ENCODE measurements at regions of chr22 and their contacts with region 1.

Region 1: DNA sequence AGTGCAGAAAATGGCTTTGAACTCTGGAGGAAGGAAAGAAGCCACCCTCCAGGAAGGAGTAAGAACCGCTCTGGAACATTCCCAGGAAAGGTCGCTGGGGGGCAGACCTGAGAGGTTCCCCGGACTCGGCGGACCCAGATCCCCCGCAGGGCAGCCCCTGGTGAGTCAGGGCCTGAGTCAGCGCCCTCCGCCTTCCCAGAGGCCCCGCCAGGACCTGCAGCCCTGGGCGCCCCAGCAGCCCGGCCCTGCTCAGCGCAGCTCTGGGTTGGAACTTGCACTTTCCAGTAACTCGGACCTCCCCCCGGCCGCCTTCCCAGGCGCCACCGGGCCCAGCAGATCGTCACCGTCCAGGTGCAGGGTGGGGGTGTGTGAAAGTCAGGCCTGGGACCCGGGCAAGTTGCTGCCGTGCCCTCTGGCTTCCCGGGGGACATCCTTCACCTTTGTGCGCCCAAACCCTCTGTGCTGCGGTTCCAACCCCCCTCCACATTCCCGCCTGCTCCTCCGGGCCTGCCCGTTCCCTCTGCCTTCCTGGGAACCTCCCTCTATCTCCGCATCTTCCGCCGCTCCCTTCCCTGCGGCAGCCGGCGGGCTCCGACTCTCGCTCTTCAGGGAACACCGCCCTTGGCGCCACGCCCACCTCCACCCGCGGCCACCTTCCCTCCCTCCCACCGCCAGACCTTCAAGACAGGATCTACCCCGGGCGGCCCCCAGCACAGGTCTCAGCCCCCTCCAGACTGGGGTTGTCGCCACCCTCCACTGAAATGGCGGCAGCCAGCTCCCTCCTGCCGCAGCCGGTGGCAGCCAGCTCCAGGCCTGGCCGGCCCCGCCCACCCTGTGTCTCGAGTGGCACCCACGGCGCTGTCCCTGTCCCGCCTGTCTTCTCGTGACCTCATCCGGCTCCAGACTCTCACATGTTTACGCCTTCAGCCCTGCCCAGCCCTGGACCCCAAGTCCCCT is 36.8 kb upstream of the WNT7B start:
- DNase-seq: peak; percentile 94
- H3K4me3 ChIP-seq: peak overlapping the region; percentile 58
- H3K27ac ChIP-seq: peak overlapping the region; percentile 82
- H3K4me1 ChIP-seq: peaks cover 18% of the 10 kb centered on the region
- H3K27me3 ChIP-seq: no peaks in the 10 kb centered on the region
- CTCF ChIP-seq: peak; percentile 77

Region 2: GRCh38 chr22:46079861-46080821 is 66.4 kb after region 1 on chr22:
- CTCF ChIA-PET with region 1: no interaction called
- POLR2A ChIA-PET with region 1: no interaction called
- intact Hi-C with region 1: loop called (anchors 5 kb)
- DNase-seq: peak; percentile 94
- H3K4me3 ChIP-seq: peak overlapping the region; percentile 85
- H3K27ac ChIP-seq: peak overlapping the region; percentile 97
- H3K4me1 ChIP-seq: peaks cover 75% of the 10 kb centered on the region
- H3K27me3 ChIP-seq: no peaks in the 10 kb centered on the region
- CTCF ChIP-seq: 0 out of 2 replicates have a peak, but pooled peaks have one; percentile 15

Region 3: GRCh38 chr22:46094676-46095075 is 80.9 kb after region 1 on chr22:
- CTCF ChIA-PET with region 1: no interaction called
- POLR2A ChIA-PET with region 1: interaction called, 12 read pairs
- intact Hi-C with region 1: no loop called
- DNase-seq: no peak
- H3K4me3 ChIP-seq: no peak overlapping the region
- H3K27ac ChIP-seq: peak overlapping the region; percentile 38
- H3K4me1 ChIP-seq: peaks cover 8% of the 10 kb centered on the region
- H3K27me3 ChIP-seq: no peaks in the 10 kb centered on the region
- CTCF ChIP-seq: no peak

Region 4: DNA sequence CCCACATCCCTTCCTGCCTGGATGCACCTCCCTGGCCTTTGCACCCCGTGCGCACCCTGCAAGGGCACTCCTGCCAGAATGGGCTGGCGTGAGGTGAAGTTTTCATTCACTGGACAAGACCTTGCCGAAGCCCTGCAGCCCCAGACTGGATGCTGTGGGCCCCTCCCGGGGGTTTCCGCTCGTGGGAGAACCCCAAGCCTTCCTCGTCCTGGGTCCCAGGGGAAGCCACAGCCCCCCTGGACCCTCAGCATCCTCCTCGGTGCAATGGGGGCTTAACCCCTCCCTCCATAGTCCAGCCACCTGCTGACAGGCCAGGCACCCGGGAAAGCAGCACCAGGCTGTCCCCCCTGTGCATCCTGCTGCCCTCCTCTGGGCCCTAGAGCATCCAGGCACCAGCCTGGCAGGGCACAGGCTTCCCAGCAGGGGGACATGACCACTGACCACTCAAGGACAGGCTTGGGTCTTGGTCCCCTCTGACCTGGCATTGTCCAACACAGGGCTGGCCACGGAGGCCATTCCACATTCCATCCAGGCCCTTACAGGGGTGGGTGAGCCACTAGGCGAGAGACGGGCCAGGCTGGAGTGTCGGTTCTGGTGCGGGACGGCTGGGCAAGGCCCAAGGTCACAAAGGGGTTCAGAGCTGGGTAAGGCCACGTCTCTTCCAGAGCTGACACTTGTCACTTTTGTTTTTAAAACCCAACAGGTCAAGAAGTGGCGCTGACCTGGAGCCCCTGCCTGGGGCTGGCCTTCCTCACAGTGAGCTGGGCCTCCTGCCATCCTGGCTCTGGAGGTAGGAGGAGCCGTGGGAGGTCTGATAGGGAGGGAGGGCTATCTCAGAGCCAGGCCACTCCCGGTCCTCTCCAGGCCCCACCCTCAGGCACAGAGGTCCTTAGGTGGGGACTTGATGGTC is 95.1 kb after region 1 on chr22:
- CTCF ChIA-PET with region 1: no interaction called
- POLR2A ChIA-PET with region 1: no interaction called
- intact Hi-C with region 1: no loop called
- DNase-seq: peak; percentile 56
- H3K4me3 ChIP-seq: no peak overlapping the region
- H3K27ac ChIP-seq: peak overlapping the region; percentile 42
- H3K4me1 ChIP-seq: peaks cover 8% of the 10 kb centered on the region
- H3K27me3 ChIP-seq: no peaks in the 10 kb centered on the region
- CTCF ChIP-seq: no peak

Measured in A673 (cell line).